Activated B cell treated with CpG ODN at 0.5 μM for 24 hours (primary cell): ENCODE measurements at regions of chr13 and their contacts with region 1.

Region 1: DNA sequence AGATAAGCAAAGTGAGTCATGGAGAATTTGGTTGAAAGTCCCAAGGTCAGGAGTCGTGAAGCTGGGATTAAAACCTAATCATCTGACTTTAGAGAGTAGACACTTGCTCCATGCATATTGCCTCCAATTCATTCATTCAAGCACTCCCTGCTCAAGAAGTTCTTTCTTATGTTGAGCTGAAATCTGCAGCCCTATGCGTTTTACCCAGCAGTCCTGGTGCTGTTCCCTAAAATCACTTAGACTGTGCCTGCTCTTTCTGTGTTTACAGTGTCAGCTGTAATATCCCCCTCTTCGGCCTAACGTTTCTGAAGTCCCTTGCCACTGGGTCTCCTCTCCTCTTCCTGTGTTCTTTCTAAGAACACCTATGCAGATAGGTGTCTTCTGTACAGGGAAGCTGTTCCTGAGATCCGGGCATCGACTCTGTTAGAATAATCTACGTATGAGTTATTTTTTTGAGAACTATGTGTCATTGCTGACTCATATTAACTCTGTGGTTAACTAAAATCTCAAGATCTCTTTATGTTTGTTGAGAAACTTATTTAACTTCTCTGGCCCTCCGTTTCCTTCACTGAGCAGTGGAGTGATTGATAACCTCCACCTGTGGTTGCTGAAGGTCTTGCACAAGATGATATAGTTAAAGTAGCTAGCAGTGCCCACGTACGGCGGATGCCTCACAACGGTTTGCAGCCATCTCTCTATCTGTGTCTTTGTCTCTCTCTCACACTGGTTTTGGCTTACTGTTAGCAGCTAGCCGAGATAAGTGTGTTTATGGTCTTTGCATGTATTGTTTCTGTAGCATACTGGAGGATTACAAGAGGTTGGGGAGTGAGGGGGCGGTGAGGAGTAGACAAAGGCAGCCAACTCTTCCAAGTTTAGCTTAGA is 4.7 kb downstream of the ALOX5AP start:
- DNase-seq: no peak
- ATAC-seq: peak; percentile 26
- H3K4me3 Mint-ChIP-seq: peak overlapping the region; percentile 74
- H3K27ac Mint-ChIP-seq: peak overlapping the region; percentile 72
- H3K4me1 Mint-ChIP-seq: peaks cover 91% of the 10 kb centered on the region
- H3K27me3 Mint-ChIP-seq: no peaks in the 10 kb centered on the region
- CTCF ChIP-seq: no peak

Region 2: GRCh38 chr13:30371649-30372265 is 368.2 kb before region 1 on chr13:
- CTCF ChIA-PET with region 1: no interaction called
- POLR2A ChIA-PET with region 1: interaction called, 4 read pairs
- intact Hi-C with region 1: loop called (anchors 1 kb)
- DNase-seq: peak; percentile 68
- ATAC-seq: peak; percentile 78
- H3K4me3 Mint-ChIP-seq: peak overlapping the region; percentile 78
- H3K27ac Mint-ChIP-seq: peak overlapping the region; percentile 84
- H3K4me1 Mint-ChIP-seq: peaks cover 85% of the 10 kb centered on the region
- H3K27me3 Mint-ChIP-seq: no peaks in the 10 kb centered on the region
- CTCF ChIP-seq: no peak

Region 3: DNA sequence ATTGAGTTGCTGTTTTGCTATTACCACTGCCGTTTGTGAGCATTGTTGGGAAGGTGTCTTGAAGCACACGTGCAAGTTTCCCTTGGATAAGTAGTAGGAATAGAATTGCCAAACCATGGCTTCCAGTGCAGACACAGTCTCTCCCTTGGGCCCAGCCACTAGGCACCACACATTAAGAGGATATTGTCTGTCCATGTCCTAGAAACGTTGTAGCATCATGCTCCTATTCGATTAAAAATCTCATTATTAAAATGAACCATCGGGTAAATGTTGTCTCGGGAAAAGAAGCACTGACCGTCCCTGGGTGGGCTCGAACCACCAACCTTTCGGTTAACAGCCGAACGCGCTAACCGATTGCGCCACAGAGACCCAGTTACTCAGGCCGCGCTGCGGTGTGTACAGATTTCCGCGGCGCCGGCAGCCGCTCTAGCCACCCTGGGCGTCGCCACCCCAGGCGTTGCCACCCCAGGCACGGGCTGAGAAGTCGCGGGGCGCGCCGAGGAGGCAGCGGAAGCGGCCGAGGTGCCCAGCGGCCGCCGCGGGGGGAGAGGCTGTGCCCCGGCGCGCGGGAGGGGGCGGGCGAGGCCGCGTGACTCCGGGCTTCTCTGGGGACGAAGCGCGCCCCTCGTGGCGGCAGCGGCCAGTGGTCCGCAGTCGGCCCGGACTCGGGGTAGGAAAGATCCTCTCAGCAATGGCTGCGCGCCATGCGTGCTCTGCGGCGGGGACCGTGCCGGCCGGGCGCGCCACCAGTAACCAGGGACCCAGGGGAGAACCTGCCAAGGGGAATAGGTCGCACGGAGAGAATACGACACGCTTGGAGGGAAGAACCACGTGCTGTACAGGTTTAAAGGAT is 66.1 kb before region 1 on chr13:
- CTCF ChIA-PET with region 1: interaction called, 3 read pairs
- POLR2A ChIA-PET with region 1: interaction called, 3 read pairs
- intact Hi-C with region 1: loop called (anchors 1 kb)
- DNase-seq: peak; percentile 94
- ATAC-seq: peak; percentile 93
- H3K4me3 Mint-ChIP-seq: peak overlapping the region; percentile 92
- H3K27ac Mint-ChIP-seq: peak overlapping the region; percentile 92
- H3K4me1 Mint-ChIP-seq: peaks cover 29% of the 10 kb centered on the region
- H3K27me3 Mint-ChIP-seq: no peaks in the 10 kb centered on the region
- CTCF ChIP-seq: no peak

Region 4: DNA sequence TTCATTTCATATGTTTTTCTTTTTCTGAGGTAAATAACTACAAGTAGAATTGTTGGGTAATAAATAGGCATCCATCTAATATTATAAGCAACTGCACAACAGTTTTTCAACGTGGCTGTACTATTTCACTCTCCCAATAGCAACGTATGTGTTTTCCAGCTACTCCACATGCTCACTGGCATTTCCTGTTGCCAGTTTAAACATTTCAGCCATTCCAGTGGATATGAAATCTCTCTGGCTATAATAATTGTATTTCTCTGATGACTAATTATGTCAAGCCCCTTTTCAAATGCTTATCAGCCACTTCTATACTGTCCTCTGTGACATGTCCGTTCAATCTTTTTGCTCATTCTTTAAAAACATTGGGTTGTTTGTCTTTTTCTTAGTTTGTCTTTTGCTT is 31.5 kb before region 1 on chr13:
- CTCF ChIA-PET with region 1: no interaction called
- POLR2A ChIA-PET with region 1: interaction called, 4 read pairs
- intact Hi-C with region 1: loop called (anchors 5 kb)
- DNase-seq: no peak
- ATAC-seq: no peak
- H3K4me3 Mint-ChIP-seq: no peak overlapping the region
- H3K27ac Mint-ChIP-seq: no peak overlapping the region
- H3K4me1 Mint-ChIP-seq: peaks cover 11% of the 10 kb centered on the region
- H3K27me3 Mint-ChIP-seq: no peaks in the 10 kb centered on the region
- CTCF ChIP-seq: no peak

Region 5: GRCh38 chr13:30725326-30726085 is 14.5 kb before region 1 on chr13:
- CTCF ChIA-PET with region 1: interaction called, 3 read pairs
- POLR2A ChIA-PET with region 1: interaction called, 25 read pairs
- intact Hi-C with region 1: loop called (anchors 1 kb)
- DNase-seq: no peak
- ATAC-seq: no peak
- H3K4me3 Mint-ChIP-seq: no peak overlapping the region
- H3K27ac Mint-ChIP-seq: no peak overlapping the region
- H3K4me1 Mint-ChIP-seq: peaks cover 24% of the 10 kb centered on the region
- H3K27me3 Mint-ChIP-seq: no peaks in the 10 kb centered on the region
- CTCF ChIP-seq: no peak

Region 6: GRCh38 chr13:30802953-30803478 is 63.0 kb after region 1 on chr13:
- CTCF ChIA-PET with region 1: no interaction called
- POLR2A ChIA-PET with region 1: no interaction called
- intact Hi-C with region 1: loop called (anchors 1 kb)
- DNase-seq: peak; percentile 73
- ATAC-seq: peak; percentile 98
- H3K4me3 Mint-ChIP-seq: peak overlapping the region; percentile 73
- H3K27ac Mint-ChIP-seq: no peak overlapping the region
- H3K4me1 Mint-ChIP-seq: peaks cover 11% of the 10 kb centered on the region
- H3K27me3 Mint-ChIP-seq: no peaks in the 10 kb centered on the region
- CTCF ChIP-seq: peak; percentile 90

Region 7: DNA sequence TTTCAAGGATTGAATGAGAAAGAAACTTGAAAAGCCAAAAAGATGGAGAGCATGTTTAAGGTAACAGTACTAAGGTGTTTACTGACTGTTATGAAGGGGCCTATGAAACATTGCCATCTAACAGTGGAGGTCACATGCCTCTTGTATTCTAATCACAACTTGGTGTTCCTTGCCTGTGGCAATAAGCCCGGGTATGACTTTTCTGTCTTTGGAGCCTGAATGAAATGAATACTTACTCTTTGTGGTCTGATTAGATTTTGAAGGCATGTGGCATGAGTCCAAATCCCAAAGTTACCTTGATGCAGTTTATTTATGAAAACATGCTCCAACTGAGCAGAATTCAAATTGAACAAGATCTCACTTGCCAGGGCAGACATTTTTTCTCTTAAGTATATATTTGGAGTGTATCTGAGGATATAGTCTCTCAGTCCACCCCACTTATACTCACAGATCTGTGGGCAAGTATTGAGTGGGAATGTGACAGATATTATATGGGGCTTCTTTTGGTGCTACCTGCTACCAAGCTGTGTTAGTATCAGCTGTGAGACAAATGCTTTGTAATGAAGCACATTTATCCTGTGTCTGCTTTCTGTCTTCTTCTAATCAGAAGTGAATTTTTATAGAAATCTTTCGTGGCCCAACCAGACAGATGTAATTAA is 527.3 kb after region 1 on chr13:
- CTCF ChIA-PET with region 1: no interaction called
- POLR2A ChIA-PET with region 1: no interaction called
- intact Hi-C with region 1: no loop called
- DNase-seq: no peak
- ATAC-seq: no peak
- H3K4me3 Mint-ChIP-seq: no peak overlapping the region
- H3K27ac Mint-ChIP-seq: no peak overlapping the region
- H3K4me1 Mint-ChIP-seq: no peaks in the 10 kb centered on the region
- H3K27me3 Mint-ChIP-seq: no peaks in the 10 kb centered on the region
- CTCF ChIP-seq: no peak

Region 8: DNA sequence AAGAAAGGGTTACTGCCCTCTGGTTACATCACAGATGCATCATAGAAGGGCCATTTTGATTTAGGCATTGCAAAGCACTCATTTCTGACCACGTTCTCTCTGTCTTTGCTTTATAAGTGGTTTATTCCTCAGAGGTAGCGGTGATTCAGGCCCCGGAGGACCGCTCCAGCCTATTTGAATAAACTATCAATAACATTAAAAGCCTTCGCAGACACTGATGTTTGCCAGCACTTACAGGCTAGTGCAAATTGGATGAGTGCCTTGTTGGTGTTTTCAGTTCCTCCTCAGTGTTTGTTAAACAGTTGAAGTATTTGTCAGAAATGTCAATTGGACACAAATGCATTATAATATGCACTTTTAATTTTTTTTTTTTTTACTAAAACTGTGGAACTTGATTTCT is 1119.6 kb after region 1 on chr13:
- CTCF ChIA-PET with region 1: no interaction called
- POLR2A ChIA-PET with region 1: no interaction called
- intact Hi-C with region 1: no loop called
- DNase-seq: no peak
- ATAC-seq: peak; percentile 56
- H3K4me3 Mint-ChIP-seq: no peak overlapping the region
- H3K27ac Mint-ChIP-seq: no peak overlapping the region
- H3K4me1 Mint-ChIP-seq: peaks cover 21% of the 10 kb centered on the region
- H3K27me3 Mint-ChIP-seq: peaks cover 10% of the 10 kb centered on the region
- CTCF ChIP-seq: no peak